H1 (cell line): ENCODE measurements at regions of chr20 and their contacts with region 1.

Region 1: DNA sequence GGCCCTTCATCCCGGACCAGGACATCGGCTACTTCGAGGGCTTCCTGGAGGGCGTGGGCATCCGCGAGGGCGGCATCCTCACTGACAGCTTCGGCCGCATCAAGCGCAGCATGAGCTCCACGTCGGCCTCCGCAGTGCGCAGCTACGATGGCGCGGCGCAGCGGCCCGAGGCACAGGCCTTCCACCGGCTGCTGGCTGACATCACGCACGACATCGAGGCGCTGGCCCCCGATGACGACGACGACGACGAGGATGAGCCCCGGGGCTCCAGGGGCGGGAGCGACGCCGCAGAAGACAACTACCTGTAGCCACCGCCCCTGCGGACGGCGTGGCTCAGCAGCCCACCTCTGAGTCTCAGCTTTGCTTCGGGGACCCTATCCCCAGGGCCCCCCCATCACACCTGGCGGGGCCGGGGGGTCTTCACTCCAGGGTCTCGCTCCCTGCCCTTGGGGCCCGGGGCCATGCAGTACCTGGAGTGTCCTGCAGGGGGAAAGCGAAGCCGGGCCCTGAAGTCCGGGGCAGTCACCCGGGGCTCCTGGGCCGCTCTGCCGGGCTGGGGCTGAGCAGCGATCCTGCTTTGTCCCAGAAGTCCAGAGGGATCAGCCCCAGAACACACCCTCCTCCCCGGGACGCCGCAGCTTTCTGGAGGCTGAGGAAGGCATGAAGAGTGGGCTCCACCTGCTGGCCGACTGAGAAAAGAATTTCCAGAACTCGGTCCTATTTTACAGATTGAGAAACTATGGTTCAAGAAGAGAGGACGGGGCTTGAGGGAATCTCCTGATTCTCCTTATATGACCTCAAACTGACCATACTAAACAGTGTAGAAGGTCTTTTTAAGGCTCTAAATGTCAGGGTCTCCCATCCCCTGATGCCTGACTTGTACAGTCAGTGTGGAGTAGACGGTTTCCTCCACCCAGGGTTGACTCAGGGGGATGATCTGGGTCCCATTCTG is 20.8 kb upstream of the HCK start:
- DNase-seq: peak; percentile 96
- H3K4me3 ChIP-seq: peak overlapping the region in 3 of 4 experiments; percentile 1 to 49 (median 23); a peak in 4 of 8 replicates
- H3K27ac ChIP-seq: no peak overlapping the region
- H3K4me1 ChIP-seq: peaks cover 0 to 7% (median 5%) of the 10 kb centered on the region in 4 experiments; a peak in 6 of 7 replicates
- H3K27me3 ChIP-seq: peaks cover 0 to 6% (median 0%) of the 10 kb centered on the region in 4 experiments; a peak in 2 of 7 replicates
- CTCF ChIP-seq: peak; percentile 78 to 93 (median 89)
- EP300 ChIP-seq: no peak
- POLR2A ChIP-seq: 0 out of 3 replicates have a peak, but pooled peaks of 1 of the 2 experiments have one; percentile 22
- RAD21 ChIP-seq: peak; percentile 89 to 90

Region 2: DNA sequence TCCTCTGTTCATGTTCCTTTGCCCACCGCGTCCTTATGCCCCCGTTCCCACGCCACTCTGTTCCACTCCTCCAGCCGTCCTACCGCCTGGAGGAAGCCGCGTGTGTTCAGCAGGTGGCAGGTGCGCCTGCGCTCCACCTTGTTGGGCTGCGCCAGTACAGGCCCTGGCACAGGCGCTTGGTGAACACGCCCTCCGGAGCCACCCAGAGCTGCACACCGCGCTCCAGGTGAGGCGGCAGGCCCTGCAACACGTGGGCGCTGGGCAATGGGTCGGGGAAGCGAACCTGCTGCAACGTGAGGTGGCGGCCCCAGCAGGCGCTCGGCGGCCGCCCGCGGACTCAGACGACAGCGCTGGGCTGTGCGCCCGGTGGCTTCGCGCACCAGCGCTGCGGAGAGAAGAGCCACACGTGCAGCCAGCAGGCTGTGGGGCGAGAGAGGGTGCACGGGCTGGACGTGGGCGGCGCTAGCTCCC is 181.8 kb before region 1 on chr20:
- CTCF ChIA-PET with region 1: interaction called, 105 read pairs
- POLR2A ChIA-PET with region 1: no interaction called
- DNase-seq: no peak
- H3K4me3 ChIP-seq: 0 out of 8 replicates have a peak overlapping the region, but pooled peaks of 1 of the 4 experiments have one; percentile 6
- H3K27ac ChIP-seq: no peak overlapping the region
- H3K4me1 ChIP-seq: peaks cover 0 to 14% (median 10%) of the 10 kb centered on the region in 4 experiments; a peak in 5 of 7 replicates
- H3K27me3 ChIP-seq: peaks cover 5 to 38% (median 25%) of the 10 kb centered on the region in 4 experiments
- CTCF ChIP-seq: no peak
- EP300 ChIP-seq: no peak
- POLR2A ChIP-seq: no peak
- RAD21 ChIP-seq: no peak; a peak in 1 of 4 replicates

Region 3: DNA sequence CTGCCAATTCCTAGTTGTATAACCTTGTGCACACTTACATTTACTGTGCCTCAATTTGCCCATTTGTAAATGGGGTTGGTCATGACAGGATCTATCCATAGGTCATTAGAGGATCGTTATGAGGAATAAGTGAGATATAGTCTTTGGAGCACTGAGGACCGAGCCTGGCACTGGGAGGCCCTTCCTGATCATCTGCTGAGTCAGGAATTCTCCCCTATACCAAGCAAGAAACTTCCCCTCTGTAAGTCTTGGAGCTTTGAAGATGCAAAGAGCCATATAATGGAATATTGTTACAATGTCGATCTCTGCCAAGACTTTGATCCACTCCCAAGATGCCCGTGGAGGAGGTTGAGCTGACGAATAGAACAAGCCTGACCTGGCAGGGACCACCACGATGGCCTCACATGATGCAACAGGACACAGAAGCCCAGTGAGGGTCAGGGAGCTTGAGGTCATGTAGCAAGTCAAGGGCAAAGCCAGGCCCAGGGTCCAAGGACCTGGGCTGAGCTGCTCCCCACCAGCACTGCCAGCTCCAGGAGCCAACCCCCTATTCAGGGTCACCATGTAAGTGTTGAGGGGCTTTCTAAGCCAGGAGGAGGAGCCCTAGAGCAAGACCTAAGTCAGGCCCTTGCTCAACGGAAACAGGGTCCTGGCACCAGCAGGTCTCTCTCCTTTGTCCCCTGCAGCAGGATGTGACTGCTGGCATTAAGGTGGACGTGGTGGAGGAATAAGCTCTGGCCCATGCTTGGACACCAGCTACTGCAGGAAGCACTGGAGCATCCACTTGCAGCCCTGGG is 96.1 kb before region 1 on chr20:
- CTCF ChIA-PET with region 1: interaction called, 19 read pairs
- POLR2A ChIA-PET with region 1: interaction called, 3 read pairs
- DNase-seq: peak; percentile 50 to 65
- H3K4me3 ChIP-seq: no peak overlapping the region
- H3K27ac ChIP-seq: no peak overlapping the region
- H3K4me1 ChIP-seq: peaks cover 0 to 8% (median 4%) of the 10 kb centered on the region in 4 experiments; a peak in 6 of 7 replicates
- H3K27me3 ChIP-seq: peaks cover 2 to 12% (median 6%) of the 10 kb centered on the region in 4 experiments; a peak in 4 of 7 replicates
- CTCF ChIP-seq: peak; percentile 67 to 96 (median 77)
- EP300 ChIP-seq: no peak
- POLR2A ChIP-seq: no peak
- RAD21 ChIP-seq: peak; percentile 72 to 82

Region 4: GRCh38 chr20:31981784-31982183 is 49.5 kb before region 1 on chr20:
- CTCF ChIA-PET with region 1: interaction called, 10 read pairs
- POLR2A ChIA-PET with region 1: no interaction called
- DNase-seq: no peak
- H3K4me3 ChIP-seq: no peak overlapping the region
- H3K27ac ChIP-seq: no peak overlapping the region
- H3K4me1 ChIP-seq: no peaks in the 10 kb centered on the region; a peak in 1 of 7 replicates
- H3K27me3 ChIP-seq: peaks cover 0 to 3% (median 0%) of the 10 kb centered on the region in 4 experiments; a peak in 2 of 7 replicates
- CTCF ChIP-seq: no peak
- EP300 ChIP-seq: no peak
- POLR2A ChIP-seq: no peak
- RAD21 ChIP-seq: no peak

Region 5: GRCh38 chr20:32018269-32019074 is 12.8 kb before region 1 on chr20:
- CTCF ChIA-PET with region 1: interaction called, 85 read pairs
- POLR2A ChIA-PET with region 1: interaction called, 8 read pairs
- DNase-seq: peak; percentile 57 to 99
- H3K4me3 ChIP-seq: peak overlapping the region; percentile 67 to 89 (median 76)
- H3K27ac ChIP-seq: peak overlapping the region; percentile 73; the same call in 1 of the 2 replicates
- H3K4me1 ChIP-seq: peaks cover 0 to 10% (median 7%) of the 10 kb centered on the region in 4 experiments; a peak in 5 of 7 replicates
- H3K27me3 ChIP-seq: peaks cover 0 to 8% (median under 1%) of the 10 kb centered on the region in 4 experiments; a peak in 4 of 7 replicates
- CTCF ChIP-seq: peak; percentile 2 to 39 (median 23)
- EP300 ChIP-seq: no peak
- POLR2A ChIP-seq: peak; percentile 83 to 84; a peak in 2 of 3 replicates
- RAD21 ChIP-seq: no peak

Region 6: GRCh38 chr20:32109392-32110172 is 78.3 kb after region 1 on chr20 and contains the start of gene TM9SF4:
- CTCF ChIA-PET with region 1: interaction called, 10 read pairs
- POLR2A ChIA-PET with region 1: interaction called, 3 read pairs
- DNase-seq: peak; percentile 80 to 95
- H3K4me3 ChIP-seq: peak within 1 kb of the TSS; percentile 81 to 100 (median 96)
- H3K27ac ChIP-seq: peak within 1 kb of the TSS; percentile 100
- H3K4me1 ChIP-seq: peaks cover 0 to 3% (median 0%) of the 10 kb centered on the region in 4 experiments; a peak in 3 of 7 replicates
- H3K27me3 ChIP-seq: no peaks in the 10 kb centered on the region
- CTCF ChIP-seq: peak in 1 of 3 experiments; percentile 10; a peak in 1 of 4 replicates
- EP300 ChIP-seq: no peak; a peak in 1 of 3 replicates
- POLR2A ChIP-seq: peak; percentile 92 to 99
- RAD21 ChIP-seq: no peak
- total RNA-seq, gene TM9SF4: 38.4 and 40.5 TPM in 2 replicates

Region 7: DNA sequence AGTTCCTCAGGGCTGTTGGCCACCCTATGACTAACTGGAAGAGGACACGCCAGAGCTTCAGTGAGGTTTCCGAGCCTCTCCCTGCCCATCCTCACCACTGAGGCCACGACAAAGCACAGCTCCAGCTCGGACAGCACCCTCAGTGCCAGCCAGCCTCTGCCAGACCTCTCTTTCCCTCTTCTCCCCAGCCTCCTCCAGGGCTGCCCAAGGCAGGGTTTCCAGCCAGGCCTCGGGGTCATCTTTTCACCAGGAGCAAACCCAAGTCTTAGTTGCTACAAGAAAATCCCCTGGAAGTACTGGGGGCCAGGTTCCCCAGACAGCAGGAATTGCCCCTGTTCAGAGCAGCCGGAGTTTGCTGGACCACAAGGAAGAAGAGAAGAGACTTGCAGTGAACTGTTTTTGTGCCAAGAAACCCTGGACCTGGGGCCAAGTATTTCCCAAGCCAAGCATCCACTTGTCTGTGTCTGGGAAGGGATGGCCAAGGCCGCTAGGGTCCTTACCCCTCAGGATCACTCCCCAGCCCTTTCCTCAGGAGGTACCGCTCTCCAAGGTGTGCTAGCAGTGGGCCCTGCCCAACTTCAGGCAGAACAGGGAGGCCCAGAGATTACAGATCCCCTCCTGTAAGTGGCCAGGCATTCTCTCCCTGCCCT is 134.7 kb after region 1 on chr20:
- CTCF ChIA-PET with region 1: no interaction called
- POLR2A ChIA-PET with region 1: no interaction called
- DNase-seq: no peak
- H3K4me3 ChIP-seq: no peak overlapping the region
- H3K27ac ChIP-seq: no peak overlapping the region
- H3K4me1 ChIP-seq: peaks cover 0 to 7% (median 3%) of the 10 kb centered on the region in 4 experiments; a peak in 3 of 7 replicates
- H3K27me3 ChIP-seq: no peaks in the 10 kb centered on the region
- CTCF ChIP-seq: no peak
- EP300 ChIP-seq: no peak
- POLR2A ChIP-seq: no peak
- RAD21 ChIP-seq: no peak